ENCODE measurements at regions of chr10 and their contacts with region 1.

Region 1: DNA sequence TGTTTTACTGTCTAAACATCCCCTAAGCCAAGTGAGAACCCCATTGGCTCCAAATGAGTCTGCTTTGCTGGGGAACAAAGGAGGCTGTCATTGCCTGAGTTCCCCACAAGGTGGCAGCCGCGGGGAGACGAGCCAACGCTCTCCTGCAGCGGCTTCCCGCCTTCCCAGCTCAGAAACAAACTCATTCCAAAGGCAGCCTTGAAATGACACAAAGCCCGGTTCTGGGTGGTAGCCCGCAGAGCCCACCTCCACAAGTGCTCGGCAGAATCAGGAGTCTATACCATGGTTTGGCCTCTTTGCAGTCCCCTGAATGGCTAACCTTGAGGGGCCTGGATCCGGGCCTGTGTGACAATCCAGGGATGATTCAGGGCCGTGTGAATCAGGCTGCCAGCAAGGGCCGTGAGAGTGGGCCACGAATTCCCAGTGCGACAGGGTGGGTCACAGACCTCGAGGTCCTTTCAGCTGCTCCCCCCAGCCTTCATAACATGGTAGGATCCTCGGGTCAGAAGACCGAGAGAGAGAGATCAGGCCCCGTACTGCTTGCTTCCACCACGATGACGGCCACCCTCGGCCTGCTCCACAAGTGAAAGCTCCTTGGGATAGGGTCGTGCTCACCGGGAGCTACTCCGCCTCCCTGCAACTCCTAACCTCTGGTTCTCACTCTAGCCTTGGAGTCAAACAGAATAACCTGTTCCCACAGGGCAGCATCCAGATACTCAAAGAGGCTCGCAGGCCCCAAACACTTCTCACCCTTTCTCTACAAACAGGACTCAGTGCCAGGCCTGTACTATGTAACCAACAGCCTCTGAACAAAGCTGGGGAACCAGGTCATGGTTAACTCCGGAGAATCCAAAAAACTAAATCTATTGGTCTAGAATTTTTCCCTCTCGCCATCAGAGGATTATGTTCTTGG is 79.6 kb downstream of the DLG5 start:
- DNase-seq: peak; percentile 45 to 80
- H3K4me3 ChIP-seq: no peak overlapping the region
- H3K27ac ChIP-seq: no peak overlapping the region
- H3K4me1 ChIP-seq: peaks cover 25% of the 10 kb centered on the region
- H3K27me3 ChIP-seq: no peaks in the 10 kb centered on the region
- CTCF ChIP-seq: peak; percentile 99

Region 2: DNA sequence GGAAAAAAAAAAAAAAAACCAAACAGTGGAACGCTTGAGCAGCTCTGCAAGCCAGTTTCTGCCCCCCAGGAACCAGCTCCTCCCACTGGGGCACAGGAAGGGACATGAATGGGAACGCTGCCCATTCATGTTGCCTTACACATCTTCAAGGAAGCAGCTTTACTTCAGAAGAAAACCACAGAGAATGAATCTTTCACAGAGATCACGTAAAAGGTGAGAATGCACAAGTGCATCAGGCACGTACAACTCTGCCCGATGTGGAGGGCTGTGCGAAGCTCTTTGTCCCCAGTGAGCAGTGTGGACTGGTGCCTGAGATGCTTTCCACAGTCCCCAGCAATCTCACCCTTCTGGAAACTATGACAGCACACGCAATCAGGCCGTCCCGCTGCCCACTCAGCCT is 26.6 kb before region 1 on chr10:
- CTCF ChIA-PET with region 1: no interaction called
- POLR2A ChIA-PET with region 1: no interaction called
- intact Hi-C with region 1: no loop called
- DNase-seq: no peak
- H3K4me3 ChIP-seq: no peak overlapping the region
- H3K27ac ChIP-seq: no peak overlapping the region
- H3K4me1 ChIP-seq: no peaks in the 10 kb centered on the region
- H3K27me3 ChIP-seq: no peaks in the 10 kb centered on the region
- CTCF ChIP-seq: no peak

Region 3: DNA sequence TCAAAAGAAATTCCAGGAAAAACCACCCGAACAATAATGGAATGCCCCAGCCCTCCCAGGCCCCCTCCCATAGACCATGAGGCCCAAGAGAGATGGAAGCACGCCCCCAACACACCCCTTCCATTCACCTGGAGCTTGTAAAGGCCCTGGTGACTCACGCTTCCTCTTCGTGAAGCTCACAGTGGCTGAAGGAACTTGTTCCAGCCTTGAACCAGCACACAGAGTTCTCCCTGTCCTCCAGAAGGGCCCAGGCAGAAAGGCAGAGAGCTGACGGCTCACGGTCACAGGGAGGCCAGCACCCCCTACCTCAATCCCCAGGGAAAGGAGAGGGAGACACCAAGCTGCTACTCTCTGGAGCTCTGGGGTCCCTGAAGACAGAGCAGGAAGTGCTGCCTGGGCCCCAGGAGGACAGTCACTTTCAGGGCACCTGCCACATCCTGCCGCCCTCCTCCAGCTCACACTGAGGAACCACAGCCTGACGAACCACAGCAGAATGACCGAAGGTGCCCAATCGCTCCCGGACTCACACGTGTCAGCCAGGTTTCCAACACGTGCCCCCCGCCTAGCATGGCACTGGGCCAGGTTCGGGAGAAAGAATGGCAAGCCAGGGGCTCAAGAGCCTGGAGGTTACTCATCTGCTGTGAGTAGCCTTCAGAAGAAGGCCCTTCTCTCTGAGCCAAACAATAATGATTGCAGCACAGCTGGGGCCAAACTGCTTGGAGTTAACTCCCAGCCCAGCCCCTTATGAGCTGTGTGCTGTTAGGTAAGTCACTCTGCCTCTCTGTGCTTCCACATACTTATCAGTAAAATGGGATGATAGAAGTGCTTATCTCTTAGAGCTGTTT is 26.8 kb after region 1 on chr10:
- CTCF ChIA-PET with region 1: interaction called, 3 read pairs
- POLR2A ChIA-PET with region 1: no interaction called
- intact Hi-C with region 1: loop called (anchors 1 kb)
- DNase-seq: peak; percentile 92 to 93
- H3K4me3 ChIP-seq: peak overlapping the region; percentile 2; the same call in 1 of the 2 replicates
- H3K27ac ChIP-seq: peak overlapping the region; percentile 89
- H3K4me1 ChIP-seq: peaks cover 35% of the 10 kb centered on the region
- H3K27me3 ChIP-seq: no peaks in the 10 kb centered on the region
- CTCF ChIP-seq: no peak

Region 4: DNA sequence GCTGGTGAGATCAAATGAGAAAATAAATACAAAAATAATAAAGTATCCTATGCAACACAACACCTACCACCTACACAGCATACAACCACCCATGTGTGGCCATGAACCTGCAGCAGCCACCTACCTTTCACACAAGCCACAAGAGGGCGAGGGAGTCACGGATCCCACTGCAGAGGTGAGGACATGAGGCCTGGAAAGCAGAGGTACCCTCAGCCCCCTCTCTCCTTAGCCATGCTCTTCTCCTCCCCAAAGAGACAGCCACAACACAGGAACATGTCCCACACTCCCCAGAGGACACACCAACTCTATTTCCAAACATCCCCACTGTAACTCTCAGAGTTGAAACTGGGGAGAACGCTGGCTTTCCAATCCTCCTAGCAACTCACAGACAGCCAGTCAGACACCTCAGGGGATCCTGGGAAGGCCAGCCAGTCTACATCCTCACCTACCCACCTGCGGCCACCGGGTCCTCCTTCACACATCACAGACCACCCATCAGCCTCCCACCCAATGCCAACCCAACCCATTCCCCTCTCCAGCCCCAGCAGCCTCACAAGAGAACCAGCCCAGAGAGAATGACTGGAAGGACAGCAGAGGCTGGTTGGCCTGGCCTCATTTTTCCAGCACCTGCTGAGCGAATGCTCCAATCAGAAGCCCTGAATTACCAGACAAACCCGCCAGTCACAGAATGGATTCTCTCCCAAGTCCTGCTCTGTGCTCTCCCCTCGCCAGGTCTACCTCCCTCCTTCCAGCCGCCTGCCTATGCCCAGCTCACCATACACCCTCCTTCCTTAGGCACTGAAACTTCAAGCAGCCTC is 61.1 kb after region 1 on chr10:
- CTCF ChIA-PET with region 1: interaction called, 4 read pairs
- POLR2A ChIA-PET with region 1: interaction called, 5 read pairs
- intact Hi-C with region 1: loop called (anchors 5 kb)
- DNase-seq: no peak
- H3K4me3 ChIP-seq: no peak overlapping the region
- H3K27ac ChIP-seq: no peak overlapping the region
- H3K4me1 ChIP-seq: peaks cover 27% of the 10 kb centered on the region
- H3K27me3 ChIP-seq: no peaks in the 10 kb centered on the region
- CTCF ChIP-seq: peak; percentile 47

Region 5: DNA sequence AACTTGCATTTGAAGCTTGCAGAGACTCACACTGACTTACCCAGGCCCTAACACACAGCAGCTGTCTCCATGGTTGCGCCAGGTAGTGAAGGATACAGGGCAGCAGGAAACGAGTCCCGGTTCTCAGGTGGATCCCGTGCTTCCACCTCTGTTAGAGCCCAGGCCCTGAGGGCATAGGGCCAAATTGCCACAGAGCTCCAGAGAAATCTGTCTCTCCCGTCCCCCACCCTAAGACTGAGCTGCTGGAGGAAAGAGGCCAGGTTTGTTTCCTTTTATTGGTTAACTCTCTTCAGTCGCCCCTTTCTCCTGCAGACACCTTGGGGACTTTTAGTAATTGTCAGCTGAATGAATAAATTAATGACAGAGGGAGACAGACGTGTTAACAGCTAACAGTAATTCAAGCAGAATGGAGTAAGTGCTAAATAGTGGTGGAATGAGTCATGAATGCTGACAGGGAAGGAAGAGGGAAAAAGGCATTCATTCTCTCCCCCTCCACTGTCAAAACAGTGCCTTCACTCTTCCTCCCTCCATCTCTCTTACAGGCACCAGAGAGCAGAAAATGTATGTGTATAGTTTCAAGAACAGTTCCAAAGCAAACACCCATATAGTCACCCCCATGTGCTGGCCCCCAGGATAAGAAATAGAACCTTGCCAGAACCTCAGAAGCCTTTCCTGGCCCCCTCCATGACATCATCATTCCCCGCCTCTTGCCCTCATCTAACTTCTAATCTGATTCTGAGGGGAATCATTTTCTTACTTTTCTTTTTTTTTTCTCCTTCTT is 96.3 kb after region 1 on chr10:
- CTCF ChIA-PET with region 1: no interaction called
- POLR2A ChIA-PET with region 1: no interaction called
- intact Hi-C with region 1: loop called (anchors 1 kb)
- DNase-seq: peak; percentile 80 to 94
- H3K4me3 ChIP-seq: no peak overlapping the region; the same call in 1 of the 2 replicates
- H3K27ac ChIP-seq: peak overlapping the region; percentile 92
- H3K4me1 ChIP-seq: peaks cover 60% of the 10 kb centered on the region
- H3K27me3 ChIP-seq: no peaks in the 10 kb centered on the region
- CTCF ChIP-seq: no peak

Region 6: DNA sequence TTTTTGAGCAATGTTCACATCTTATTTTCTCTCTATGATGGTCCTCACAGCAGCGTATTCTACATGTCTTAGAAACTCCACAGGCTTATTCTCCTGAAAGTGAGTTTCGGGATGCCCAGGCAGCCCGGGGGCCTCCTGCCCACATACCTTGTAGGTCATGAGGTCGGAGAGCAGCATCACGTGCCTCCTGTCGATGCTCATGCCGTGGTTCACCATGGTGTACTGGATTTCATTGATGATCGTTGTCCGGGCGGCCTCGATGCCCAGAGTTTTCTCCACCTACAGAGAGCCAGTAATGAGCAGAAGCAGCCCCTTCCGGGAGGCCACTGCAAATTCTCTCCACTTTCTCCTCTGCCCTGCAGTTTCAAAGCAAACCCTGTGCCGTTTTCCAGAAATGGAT is 134.3 kb after region 1 on chr10:
- CTCF ChIA-PET with region 1: no interaction called
- POLR2A ChIA-PET with region 1: no interaction called
- intact Hi-C with region 1: no loop called
- DNase-seq: no peak
- H3K4me3 ChIP-seq: no peak overlapping the region
- H3K27ac ChIP-seq: no peak overlapping the region
- H3K4me1 ChIP-seq: peaks cover 14% of the 10 kb centered on the region
- H3K27me3 ChIP-seq: no peaks in the 10 kb centered on the region
- CTCF ChIP-seq: no peak

Region 7: DNA sequence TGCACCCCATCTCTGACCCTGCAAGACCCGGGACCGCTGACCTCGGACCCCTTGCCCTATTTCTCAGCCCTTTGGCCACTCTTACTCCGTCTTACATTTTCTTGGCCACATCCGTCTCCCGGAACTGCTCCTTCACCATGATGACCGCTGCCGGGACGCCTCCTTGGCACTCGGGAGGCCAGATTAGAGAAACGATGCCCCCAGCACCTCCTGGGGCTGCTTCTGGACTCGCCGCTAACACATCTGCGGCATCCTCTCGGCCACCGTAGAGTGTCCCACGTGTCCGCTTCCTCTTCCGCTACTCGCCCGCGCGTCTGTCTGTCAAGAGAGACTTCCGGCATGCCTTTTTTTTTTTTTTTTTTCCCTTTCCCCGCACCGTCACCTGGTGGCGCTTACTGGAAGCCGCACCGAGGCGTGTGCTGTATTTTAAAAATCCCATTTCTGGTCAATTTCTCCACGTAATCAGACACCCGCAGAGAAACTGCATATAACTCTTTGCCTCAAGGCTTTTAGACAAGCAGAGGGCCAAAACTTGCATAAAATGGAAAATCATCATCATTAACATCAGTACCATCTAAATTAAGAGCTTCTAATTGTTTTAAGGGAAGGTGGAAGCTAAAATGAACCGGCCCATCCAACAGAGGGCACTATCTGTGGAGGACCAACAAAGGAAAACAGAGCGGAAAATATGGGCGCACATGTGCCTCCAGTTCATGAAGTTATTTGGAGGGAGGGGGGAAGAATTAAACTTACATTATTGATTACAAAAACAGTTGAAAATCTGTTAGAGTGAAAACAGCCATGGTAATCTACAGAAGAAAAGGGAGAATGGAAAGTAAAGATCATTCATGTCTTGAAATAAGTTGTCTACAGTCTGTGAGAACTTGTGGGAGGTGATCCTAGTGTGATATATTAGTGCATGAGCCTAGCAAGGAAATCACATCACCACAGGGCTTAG is 182.6 kb after region 1 on chr10 and contains the start of gene POLR3A:
- CTCF ChIA-PET with region 1: no interaction called
- POLR2A ChIA-PET with region 1: no interaction called
- intact Hi-C with region 1: loop called (anchors 1 kb)
- DNase-seq: peak; percentile 93 to 96
- H3K4me3 ChIP-seq: peak within 1 kb of the TSS; percentile 74
- H3K27ac ChIP-seq: peak within 1 kb of the TSS; percentile 28
- H3K4me1 ChIP-seq: peaks cover 38% of the 10 kb centered on the region
- H3K27me3 ChIP-seq: no peaks in the 10 kb centered on the region
- CTCF ChIP-seq: peak; percentile 87
- total RNA-seq, gene POLR3A: 13.1 and 14.9 TPM in 2 replicates